GM12878 (cell line): ENCODE measurements at regions of chr1 and their contacts with region 1.

Region 1: DNA sequence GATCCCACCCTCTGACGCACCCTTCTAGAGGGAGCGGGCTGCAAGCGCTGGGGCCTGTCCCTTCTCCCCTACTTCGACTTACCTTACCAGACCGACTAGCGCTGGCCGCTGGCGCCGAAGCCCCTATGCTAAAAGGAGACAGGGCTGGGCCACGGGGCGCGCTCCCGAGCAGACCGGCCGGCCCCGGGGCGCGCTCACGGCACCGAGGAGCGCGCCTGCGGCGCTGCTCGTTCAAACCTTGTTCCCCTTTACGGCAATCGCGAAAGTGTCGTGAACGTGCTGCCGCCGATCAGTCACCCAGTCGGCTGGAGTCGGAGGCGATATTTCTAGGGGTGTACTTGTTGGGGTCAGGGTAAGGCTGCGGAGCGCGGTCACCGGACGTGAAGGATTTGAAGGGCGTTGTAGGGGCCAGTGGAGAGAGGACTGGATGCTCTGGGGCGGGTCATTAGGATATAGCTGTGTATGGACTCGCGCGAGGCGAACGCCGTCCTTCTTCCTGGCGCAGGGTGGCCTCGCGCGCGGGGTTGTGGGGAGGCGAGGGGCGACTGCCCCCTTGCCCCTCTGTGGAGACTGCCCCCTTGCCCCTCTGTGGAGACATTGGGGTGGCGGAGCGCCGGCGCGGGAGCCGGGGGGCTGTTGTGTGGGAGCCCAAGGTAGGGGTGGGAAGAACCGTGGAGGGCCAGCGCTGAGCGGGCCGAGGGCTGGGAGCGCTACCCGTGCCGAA is at the starts of genes CEPT1 and DRAM2:
- DNase-seq: peak; percentile 76
- ATAC-seq: peak; percentile 73
- H3K4me3 ChIP-seq: peak within 1 kb of the TSS; percentile 95
- H3K27ac ChIP-seq: peak within 1 kb of the TSS; percentile 89
- H3K4me1 ChIP-seq: peaks cover 14% of the 10 kb centered on the region
- H3K27me3 ChIP-seq: no peaks in the 10 kb centered on the region
- CTCF ChIP-seq: no peak
- EP300 ChIP-seq: no peak
- POLR2A ChIP-seq: peak; percentile 90
- RAD21 ChIP-seq: no peak
- polyA plus RNA-seq, gene CEPT1: 29.4 to 55.5 TPM
- polyA plus RNA-seq, gene DRAM2: 88.3 to 146 TPM

Region 2: DNA sequence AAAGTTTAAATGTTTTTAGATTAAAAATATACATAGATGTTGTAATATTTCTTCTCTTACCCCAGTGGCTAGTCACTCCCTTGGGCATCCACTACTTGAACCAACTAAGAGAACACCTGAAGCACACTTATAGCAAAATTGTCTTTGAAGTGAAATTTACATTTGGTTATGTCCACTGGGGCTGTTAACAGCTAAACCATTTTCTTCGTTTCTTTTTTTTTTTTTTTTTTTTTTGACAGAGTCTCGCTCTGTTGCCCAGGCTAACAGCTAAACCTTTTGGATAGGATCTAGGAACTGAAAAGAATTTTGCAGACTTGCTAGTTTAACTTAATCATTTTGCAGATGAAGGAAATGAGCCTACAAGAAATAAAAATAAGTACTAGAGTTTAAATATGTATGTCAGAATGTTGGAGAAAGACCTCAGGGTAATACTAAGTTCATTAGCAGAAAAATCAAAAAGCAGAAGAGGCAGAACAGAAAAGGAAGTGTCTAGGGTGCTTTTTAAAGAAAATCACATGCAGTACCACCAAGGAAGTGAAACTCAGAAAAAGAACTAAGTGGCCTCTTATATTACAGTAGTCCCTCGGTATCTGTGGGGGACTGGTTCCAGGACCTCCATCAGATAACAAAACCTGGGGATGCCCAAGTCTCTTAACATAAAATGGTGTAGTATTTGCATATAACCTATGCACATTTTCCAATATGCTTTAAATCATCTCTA is 12.0 kb before region 1 on chr1:
- CTCF ChIA-PET with region 1: interaction called, 11 read pairs
- POLR2A ChIA-PET with region 1: interaction called, 20 read pairs
- RAD21 ChIA-PET with region 1: interaction called, 35 read pairs
- SMC1A ChIA-PET with region 1: interaction called, 42 read pairs
- in situ Hi-C with region 1: no loop called
- intact Hi-C with region 1: no loop called
- DNase-seq: peak; percentile 81
- ATAC-seq: peak; percentile 90
- H3K4me3 ChIP-seq: 0 out of 2 replicates have a peak overlapping the region, but pooled peaks have one; percentile 45
- H3K27ac ChIP-seq: peak overlapping the region; percentile 94
- H3K4me1 ChIP-seq: peaks cover 43% of the 10 kb centered on the region
- H3K27me3 ChIP-seq: no peaks in the 10 kb centered on the region
- CTCF ChIP-seq: no peak
- EP300 ChIP-seq: peak; percentile 26 to 54; a peak in 1 of 4 replicates
- POLR2A ChIP-seq: no peak
- RAD21 ChIP-seq: no peak

Region 3: GRCh38 chr1:111154021-111154999 is 14.2 kb after region 1 on chr1:
- CTCF ChIA-PET with region 1: interaction called, 9 read pairs
- POLR2A ChIA-PET with region 1: interaction called, 62 read pairs
- RAD21 ChIA-PET with region 1: interaction called, 12 read pairs
- SMC1A ChIA-PET with region 1: interaction called, 101 read pairs
- in situ Hi-C with region 1: no loop called
- intact Hi-C with region 1: no loop called
- DNase-seq: no peak
- ATAC-seq: peak; percentile 24
- H3K4me3 ChIP-seq: peak overlapping the region; percentile 4; the same call in 1 of the 2 replicates
- H3K27ac ChIP-seq: no peak overlapping the region
- H3K4me1 ChIP-seq: no peaks in the 10 kb centered on the region; the same call in none of the 2 replicates
- H3K27me3 ChIP-seq: no peaks in the 10 kb centered on the region
- CTCF ChIP-seq: no peak
- EP300 ChIP-seq: no peak
- POLR2A ChIP-seq: no peak
- RAD21 ChIP-seq: no peak

Region 4: GRCh38 chr1:111161843-111162487 is 21.8 kb after region 1 on chr1:
- CTCF ChIA-PET with region 1: interaction called, 4 read pairs
- POLR2A ChIA-PET with region 1: interaction called, 62 read pairs
- RAD21 ChIA-PET with region 1: interaction called, 4 read pairs
- SMC1A ChIA-PET with region 1: interaction called, 101 read pairs
- in situ Hi-C with region 1: no loop called
- intact Hi-C with region 1: no loop called
- DNase-seq: no peak
- ATAC-seq: no peak; the same call in 2 of the 3 replicates
- H3K4me3 ChIP-seq: no peak overlapping the region
- H3K27ac ChIP-seq: no peak overlapping the region
- H3K4me1 ChIP-seq: no peaks in the 10 kb centered on the region
- H3K27me3 ChIP-seq: no peaks in the 10 kb centered on the region
- CTCF ChIP-seq: no peak
- EP300 ChIP-seq: no peak
- POLR2A ChIP-seq: no peak
- RAD21 ChIP-seq: no peak

Region 5: DNA sequence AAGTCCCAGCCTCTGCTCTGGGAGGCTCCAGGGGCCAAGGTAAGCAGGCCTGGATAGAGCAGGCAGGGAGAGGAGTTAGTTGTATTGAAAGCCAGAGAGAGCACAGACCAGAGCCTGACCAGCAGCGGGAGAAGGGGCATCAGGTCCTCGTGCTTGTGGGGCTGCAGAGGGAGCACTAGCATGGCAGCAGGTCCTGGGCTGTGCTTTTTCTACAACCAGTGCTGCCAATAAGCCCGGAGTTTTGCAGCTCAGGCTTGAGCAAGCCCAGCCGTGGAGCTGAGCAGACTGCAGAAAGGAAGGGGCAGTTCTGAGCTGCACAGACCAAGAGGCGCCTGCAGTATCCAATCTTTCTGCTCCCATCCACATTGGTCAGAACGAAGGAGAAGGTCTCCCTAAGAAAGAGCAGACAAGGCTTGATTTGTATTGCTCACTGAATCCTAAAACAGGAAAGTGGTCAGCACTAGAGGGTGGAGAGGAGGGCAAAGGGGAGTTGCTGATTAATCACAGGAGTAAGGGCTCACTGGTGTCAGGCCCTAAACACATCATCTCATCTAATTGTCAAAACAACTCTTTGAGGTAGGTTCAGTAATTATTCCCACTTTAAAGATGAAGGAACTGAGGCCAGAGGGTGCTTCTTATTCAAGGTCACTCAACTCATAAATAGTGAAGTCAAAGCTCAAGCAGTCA is 57.6 kb after region 1 on chr1:
- CTCF ChIA-PET with region 1: interaction called, 21 read pairs
- POLR2A ChIA-PET with region 1: interaction called, 17 read pairs
- RAD21 ChIA-PET with region 1: interaction called, 28 read pairs
- SMC1A ChIA-PET with region 1: interaction called, 46 read pairs
- in situ Hi-C with region 1: no loop called
- intact Hi-C with region 1: loop called (anchors 5 kb)
- DNase-seq: no peak
- ATAC-seq: peak; percentile 28
- H3K4me3 ChIP-seq: peak overlapping the region; percentile 73
- H3K27ac ChIP-seq: peak overlapping the region; percentile 92
- H3K4me1 ChIP-seq: peaks cover 40% of the 10 kb centered on the region
- H3K27me3 ChIP-seq: no peaks in the 10 kb centered on the region
- CTCF ChIP-seq: peak; percentile 54 to 65 (median 55)
- EP300 ChIP-seq: no peak
- POLR2A ChIP-seq: no peak
- RAD21 ChIP-seq: peak; percentile 58

Region 6: GRCh38 chr1:111214074-111214801 is 74.1 kb after region 1 on chr1:
- CTCF ChIA-PET with region 1: interaction called, 36 read pairs
- POLR2A ChIA-PET with region 1: interaction called, 19 read pairs
- RAD21 ChIA-PET with region 1: interaction called, 109 read pairs
- SMC1A ChIA-PET with region 1: interaction called, 164 read pairs
- in situ Hi-C with region 1: no loop called
- intact Hi-C with region 1: no loop called
- DNase-seq: peak; percentile 81
- ATAC-seq: peak; percentile 23
- H3K4me3 ChIP-seq: no peak overlapping the region
- H3K27ac ChIP-seq: peak overlapping the region; percentile 100
- H3K4me1 ChIP-seq: peaks cover 62% of the 10 kb centered on the region
- H3K27me3 ChIP-seq: no peaks in the 10 kb centered on the region
- CTCF ChIP-seq: no peak
- EP300 ChIP-seq: no peak
- POLR2A ChIP-seq: no peak
- RAD21 ChIP-seq: 0 out of 2 replicates have a peak, but pooled peaks have one; percentile 1

Region 7: DNA sequence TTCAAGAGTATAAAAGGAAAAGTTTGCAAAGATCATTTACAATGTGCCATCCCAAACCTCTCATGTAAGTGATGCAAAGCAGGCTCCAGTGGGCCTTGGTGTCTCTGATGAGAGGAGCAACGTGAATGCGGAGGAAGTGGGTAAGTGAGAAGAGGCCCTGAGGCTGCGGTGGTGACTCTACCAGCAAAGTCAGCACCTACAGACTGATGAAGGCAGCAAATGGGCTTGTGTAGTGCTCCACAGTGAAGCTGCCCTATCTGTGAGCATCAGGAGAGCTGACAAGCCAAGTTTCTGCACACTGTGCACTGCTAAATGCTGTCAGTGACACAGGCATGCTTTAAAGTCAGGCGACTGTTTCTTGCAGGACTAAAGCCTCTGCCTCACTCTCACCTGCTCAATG is 463.9 kb after region 1 on chr1:
- CTCF ChIA-PET with region 1: no interaction called
- POLR2A ChIA-PET with region 1: no interaction called
- RAD21 ChIA-PET with region 1: no interaction called
- SMC1A ChIA-PET with region 1: no interaction called
- in situ Hi-C with region 1: no loop called
- intact Hi-C with region 1: loop called (anchors 10 kb)
- DNase-seq: no peak
- ATAC-seq: peak; percentile 56
- H3K4me3 ChIP-seq: no peak overlapping the region
- H3K27ac ChIP-seq: peak overlapping the region; percentile 98
- H3K4me1 ChIP-seq: peaks cover 54% of the 10 kb centered on the region
- H3K27me3 ChIP-seq: no peaks in the 10 kb centered on the region
- CTCF ChIP-seq: no peak
- EP300 ChIP-seq: no peak
- POLR2A ChIP-seq: peak; percentile 70
- RAD21 ChIP-seq: no peak